Endothelial cell of umbilical vein (primary cell): ENCODE measurements at regions of chr1 and their contacts with region 1.

Region 1: GRCh38 chr1:16122916-16123315 is 33.0 kb downstream of the EPHA2 start:
- DNase-seq: no peak
- H3K4me3 ChIP-seq: no peak overlapping the region
- H3K27ac ChIP-seq: no peak overlapping the region
- H3K4me1 ChIP-seq: no peaks in the 10 kb centered on the region
- H3K27me3 ChIP-seq: no peaks in the 10 kb centered on the region
- CTCF ChIP-seq: no peak
- POLR2A ChIP-seq: no peak

Region 2: DNA sequence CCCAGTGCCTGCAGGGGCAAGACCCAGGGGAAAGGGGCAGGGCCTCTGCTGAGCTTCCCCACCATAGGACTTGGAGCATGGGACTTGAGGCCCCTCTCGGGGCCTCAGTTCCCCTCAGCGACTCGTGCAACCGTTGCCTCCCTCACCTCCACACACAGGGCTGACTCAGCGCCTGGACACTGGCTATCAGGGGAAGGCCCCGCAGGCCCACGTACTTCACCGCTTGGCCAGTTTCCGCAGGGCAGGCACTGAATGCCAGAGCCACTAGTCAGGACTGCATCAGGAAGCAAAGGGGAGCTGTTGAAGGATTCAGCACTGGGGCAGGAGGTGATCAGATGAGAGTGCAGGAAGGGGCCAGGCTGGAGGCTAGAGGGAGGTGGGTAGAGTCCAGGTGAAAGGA is 33.9 kb before region 1 on chr1:
- CTCF ChIA-PET with region 1: interaction called, 67 read pairs
- POLR2A ChIA-PET with region 1: no interaction called
- dilution Hi-C with region 1: no loop called
- intact Hi-C with region 1: loop called (anchors 5 kb)
- DNase-seq: peak; percentile 44
- H3K4me3 ChIP-seq: no peak overlapping the region
- H3K27ac ChIP-seq: no peak overlapping the region
- H3K4me1 ChIP-seq: no peaks in the 10 kb centered on the region
- H3K27me3 ChIP-seq: no peaks in the 10 kb centered on the region
- CTCF ChIP-seq: no peak
- POLR2A ChIP-seq: no peak

Region 3: DNA sequence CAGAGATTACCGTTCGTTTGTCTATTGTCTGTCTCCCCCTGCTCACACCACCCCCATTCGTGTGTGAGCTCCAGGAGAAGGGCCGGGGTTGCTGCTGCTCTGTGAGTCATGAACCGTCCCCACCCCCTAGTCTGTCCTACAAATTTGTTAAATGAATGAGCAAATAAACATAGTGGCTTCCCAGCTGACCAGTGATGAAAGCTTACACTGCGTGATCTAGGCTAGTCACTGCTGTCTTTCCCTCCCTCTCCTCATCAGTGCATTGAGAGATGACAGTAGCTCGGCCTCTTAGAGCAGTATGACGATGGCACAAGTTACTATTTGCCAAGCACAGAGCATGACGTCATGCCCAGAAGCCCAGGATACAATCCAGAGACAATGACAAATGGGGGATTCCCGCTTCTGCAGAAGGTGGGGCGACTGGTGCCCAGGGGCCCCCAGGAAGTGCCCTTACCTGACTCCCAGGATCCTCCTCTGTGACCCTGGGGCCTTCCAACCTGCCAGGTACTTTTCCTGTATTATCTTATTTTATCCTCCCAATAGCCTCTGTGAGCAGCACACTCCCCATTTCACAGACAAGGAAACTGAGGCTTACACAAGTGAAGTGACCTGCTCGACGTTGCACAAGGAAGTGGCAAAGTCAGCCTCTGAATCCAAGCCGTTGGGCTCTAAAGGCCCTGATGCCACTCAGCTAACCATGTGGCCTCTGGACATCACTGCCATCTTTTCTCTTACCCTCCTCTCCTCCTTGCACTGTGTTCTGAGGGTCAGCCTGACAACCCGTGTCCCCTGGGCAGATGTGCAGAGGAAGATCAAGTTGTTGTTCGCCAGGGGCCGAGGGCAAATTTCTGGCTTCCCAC is 41.5 kb after region 1 on chr1:
- CTCF ChIA-PET with region 1: no interaction called
- POLR2A ChIA-PET with region 1: no interaction called
- dilution Hi-C with region 1: no loop called
- intact Hi-C with region 1: no loop called
- DNase-seq: peak; percentile 88
- H3K4me3 ChIP-seq: no peak overlapping the region
- H3K27ac ChIP-seq: peak overlapping the region; percentile 68
- H3K4me1 ChIP-seq: peaks cover 15% of the 10 kb centered on the region
- H3K27me3 ChIP-seq: no peaks in the 10 kb centered on the region
- CTCF ChIP-seq: no peak
- POLR2A ChIP-seq: no peak